HepG2 (cell line): ENCODE measurements at regions of chr11 and their contacts with region 1.

Region 1: GRCh38 chr11:7513234-7514098 is at the start of gene PPFIBP2:
- DNase-seq: peak; percentile 58
- ATAC-seq: peak; percentile 88
- H3K4me3 ChIP-seq: peak within 1 kb of the TSS; percentile 65 to 93 (median 72)
- H3K27ac ChIP-seq: peak within 1 kb of the TSS; percentile 62
- H3K4me1 ChIP-seq: peaks cover 48% of the 10 kb centered on the region
- H3K27me3 ChIP-seq: no peaks in the 10 kb centered on the region; a peak in 2 of 5 replicates
- CTCF ChIP-seq: peak; percentile 85
- EP300 ChIP-seq: no peak
- POLR2A ChIP-seq: peak; percentile 37 to 62; a peak in 2 of 4 replicates
- RAD21 ChIP-seq: peak; percentile 63
- total RNA-seq, gene PPFIBP2: 15.0 and 15.8 TPM in 2 replicates

Region 2: DNA sequence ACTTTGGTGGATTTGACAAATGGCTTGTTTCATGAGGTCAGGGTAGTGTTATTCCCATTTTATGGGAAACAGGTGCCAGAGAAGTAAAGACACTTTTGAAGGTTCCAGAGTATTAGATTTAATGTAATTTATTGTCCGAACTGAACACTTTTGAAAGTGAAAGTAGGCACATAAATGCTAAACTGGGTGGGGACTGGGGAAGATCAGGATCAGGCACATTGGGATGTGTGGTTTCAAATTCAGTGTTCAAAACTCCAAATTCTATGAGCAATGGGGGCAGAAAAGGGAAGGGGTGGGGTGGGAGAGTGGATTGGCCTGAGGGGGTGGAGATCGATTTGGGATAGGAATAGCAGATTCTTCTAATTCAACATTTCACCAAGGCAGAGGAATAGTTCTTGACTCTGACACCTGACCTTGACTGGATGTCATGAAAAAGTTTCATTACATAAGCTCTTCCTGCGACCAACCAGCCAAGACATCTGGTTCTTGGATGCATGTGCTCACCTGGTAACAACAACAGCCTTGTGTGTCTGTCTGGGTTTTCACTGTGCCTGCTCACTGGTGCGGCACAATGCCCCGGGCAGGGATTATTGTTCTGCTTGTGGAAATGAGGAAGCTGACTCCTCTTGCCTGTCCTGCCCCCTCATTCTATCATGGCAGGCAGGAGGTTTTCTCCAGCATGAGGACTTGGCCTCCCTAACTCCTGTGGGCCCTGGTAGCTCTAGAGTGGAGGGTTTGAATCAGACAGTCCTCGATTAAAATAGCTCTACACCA is 11.2 kb after region 1 on chr11:
- CTCF ChIA-PET with region 1: no interaction called
- POLR2A ChIA-PET with region 1: interaction called, 22 read pairs
- in situ Hi-C with region 1: no loop called
- intact Hi-C with region 1: no loop called
- DNase-seq: no peak
- ATAC-seq: no peak
- H3K4me3 ChIP-seq: no peak overlapping the region
- H3K27ac ChIP-seq: peak overlapping the region; percentile 72
- H3K4me1 ChIP-seq: peaks cover 51% of the 10 kb centered on the region
- H3K27me3 ChIP-seq: no peaks in the 10 kb centered on the region
- CTCF ChIP-seq: no peak
- EP300 ChIP-seq: no peak
- POLR2A ChIP-seq: no peak
- RAD21 ChIP-seq: no peak

Region 3: DNA sequence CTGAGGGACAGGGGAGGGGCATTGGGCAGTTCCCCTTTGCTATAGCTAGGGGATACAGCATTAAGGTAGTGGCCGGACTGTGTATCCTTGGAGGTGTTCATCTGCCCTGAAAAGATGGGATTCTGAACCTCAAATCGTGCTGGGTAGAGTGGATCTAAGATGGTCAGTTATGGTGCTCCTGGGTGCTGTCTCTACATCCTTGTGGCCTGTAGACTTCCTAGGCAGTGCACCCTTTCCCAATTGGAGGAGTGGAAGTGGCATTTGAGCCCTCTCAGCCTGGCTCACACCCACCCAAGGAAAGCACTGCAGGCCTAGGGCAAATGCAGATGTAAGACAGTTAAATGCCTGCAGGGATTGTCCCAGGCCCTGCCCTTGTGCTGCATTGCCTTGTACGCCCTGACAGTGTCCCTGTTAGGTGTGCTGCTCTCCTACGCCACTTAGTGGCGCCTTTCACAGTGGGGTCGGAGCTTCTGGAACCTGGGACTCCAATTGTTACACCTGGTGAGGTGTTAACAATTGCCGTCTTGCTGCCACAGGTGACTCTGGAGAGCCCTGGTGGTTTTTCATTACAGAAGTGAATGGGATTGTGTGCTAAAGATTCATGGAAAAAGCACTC is 35.3 kb after region 1 on chr11:
- CTCF ChIA-PET with region 1: no interaction called
- POLR2A ChIA-PET with region 1: no interaction called
- in situ Hi-C with region 1: no loop called
- intact Hi-C with region 1: loop called (anchors 2 kb)
- DNase-seq: peak; percentile 25
- ATAC-seq: peak; percentile 99
- H3K4me3 ChIP-seq: no peak overlapping the region
- H3K27ac ChIP-seq: no peak overlapping the region
- H3K4me1 ChIP-seq: no peaks in the 10 kb centered on the region
- H3K27me3 ChIP-seq: no peaks in the 10 kb centered on the region; a peak in 1 of 5 replicates
- CTCF ChIP-seq: peak; percentile 83
- EP300 ChIP-seq: no peak
- POLR2A ChIP-seq: no peak
- RAD21 ChIP-seq: peak; percentile 71

Region 4: DNA sequence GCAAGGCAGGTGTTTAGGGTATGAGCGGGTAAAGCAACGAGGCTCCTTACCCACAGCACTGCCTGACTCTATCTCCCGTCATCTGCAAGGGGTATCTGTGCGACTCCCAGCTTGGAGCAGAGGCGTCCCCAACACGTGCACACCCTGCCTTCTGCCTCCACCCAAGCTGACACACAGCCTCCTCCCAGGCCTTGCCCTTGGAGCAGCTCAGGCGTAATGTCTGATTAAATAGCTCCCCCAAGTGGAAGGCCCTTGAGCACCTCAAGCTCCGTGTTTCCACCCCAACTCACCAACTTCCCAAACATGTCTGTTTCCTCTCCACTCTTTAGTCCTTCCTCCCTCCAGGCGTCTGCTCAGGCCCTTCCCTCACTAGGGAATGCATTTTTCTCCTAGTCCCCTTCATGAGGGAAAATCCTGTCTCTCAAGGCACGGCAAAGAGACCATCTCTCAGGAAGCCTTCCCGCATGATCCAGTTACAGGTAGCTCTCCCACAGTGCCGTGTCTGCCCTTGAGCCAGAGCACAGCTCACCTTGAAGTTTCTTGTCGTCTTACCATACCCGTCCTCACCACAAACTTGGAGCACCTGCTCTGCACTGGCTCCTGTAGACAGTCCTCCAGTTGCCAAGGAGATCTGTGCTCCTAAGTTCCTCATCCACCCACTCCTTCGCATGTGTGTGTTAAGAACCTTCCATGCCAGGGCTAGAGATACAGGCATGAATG is 144.0 kb after region 1 on chr11:
- CTCF ChIA-PET with region 1: interaction called, 7 read pairs
- POLR2A ChIA-PET with region 1: no interaction called
- in situ Hi-C with region 1: no loop called
- intact Hi-C with region 1: loop called (anchors 2 kb)
- DNase-seq: peak; percentile 67
- ATAC-seq: peak; percentile 86
- H3K4me3 ChIP-seq: no peak overlapping the region
- H3K27ac ChIP-seq: no peak overlapping the region
- H3K4me1 ChIP-seq: peaks cover 36% of the 10 kb centered on the region
- H3K27me3 ChIP-seq: no peaks in the 10 kb centered on the region
- CTCF ChIP-seq: peak; percentile 89
- EP300 ChIP-seq: no peak
- POLR2A ChIP-seq: no peak
- RAD21 ChIP-seq: peak; percentile 79

Region 5: GRCh38 chr11:7665473-7666291 is 152.2 kb after region 1 on chr11:
- CTCF ChIA-PET with region 1: interaction called, 7 read pairs
- POLR2A ChIA-PET with region 1: no interaction called
- in situ Hi-C with region 1: no loop called
- intact Hi-C with region 1: loop called (anchors 2 kb)
- DNase-seq: peak; percentile 65
- ATAC-seq: peak; percentile 98
- H3K4me3 ChIP-seq: no peak overlapping the region
- H3K27ac ChIP-seq: no peak overlapping the region
- H3K4me1 ChIP-seq: 0 out of 2 replicates have a peak, but pooled peaks cover 8% of the 10 kb centered on the region
- H3K27me3 ChIP-seq: no peaks in the 10 kb centered on the region
- CTCF ChIP-seq: peak; percentile 98
- EP300 ChIP-seq: no peak
- POLR2A ChIP-seq: no peak
- RAD21 ChIP-seq: peak; percentile 93